Natural killer cell (primary cell): ENCODE measurements at regions of chr18 and their contacts with region 1.

Region 1: DNA sequence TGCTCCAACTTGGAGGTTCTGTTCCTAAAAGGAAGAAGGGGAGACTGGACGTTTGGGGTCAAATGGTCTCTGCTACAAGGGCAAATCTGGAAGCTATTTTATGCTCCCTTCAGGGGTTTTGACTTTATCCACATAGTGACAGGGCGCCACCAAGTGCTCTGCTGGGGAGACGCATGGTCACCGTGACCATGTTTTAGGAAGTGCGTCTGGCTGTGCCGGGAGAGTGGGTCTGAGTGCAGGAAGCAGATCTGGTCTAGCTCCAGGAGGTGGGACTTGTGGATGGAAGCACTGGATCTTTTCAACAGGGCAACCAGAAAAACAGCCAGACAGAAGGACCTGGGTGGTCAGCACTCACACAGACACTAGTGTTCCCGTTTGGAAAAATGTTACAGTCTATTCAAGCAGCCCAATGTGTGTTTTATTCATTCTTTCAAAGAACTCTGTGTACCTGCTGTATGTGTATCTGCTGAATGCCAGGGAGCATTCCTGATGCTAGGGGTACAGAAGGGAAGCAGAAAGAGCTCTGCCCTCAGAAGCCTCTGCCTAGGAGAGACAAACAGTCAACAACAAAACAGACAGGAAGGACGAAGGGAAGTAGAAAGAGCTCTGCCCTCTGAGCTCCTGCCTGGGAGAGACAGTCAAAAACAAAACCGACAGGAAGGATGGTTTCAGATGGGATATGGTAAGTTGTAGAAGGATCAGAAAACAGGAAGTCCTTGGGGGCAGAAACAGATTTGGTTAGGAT is 14.3 kb downstream of the IMPA2 start:
- DNase-seq: peak; percentile 37 to 79
- ATAC-seq: peak; percentile 79 to 94 (median 92)
- H3K4me3 ChIP-seq: no peak overlapping the region
- H3K4me3 Mint-ChIP-seq: peak overlapping the region; percentile 37
- H3K27ac ChIP-seq: no peak overlapping the region
- H3K27ac Mint-ChIP-seq: peak overlapping the region in 1 of 2 donors; percentile 39
- H3K4me1 ChIP-seq: peaks cover 11% of the 10 kb centered on the region
- H3K4me1 Mint-ChIP-seq: peaks cover 8 to 15% of the 10 kb centered on the region in 2 donors
- H3K27me3 ChIP-seq: no peaks in the 10 kb centered on the region
- H3K27me3 Mint-ChIP-seq: no peaks in the 10 kb centered on the region
- CTCF ChIP-seq: peak; percentile 68

Region 2: GRCh38 chr18:11654736-11655605 is 340.6 kb before region 1 on chr18:
- intact Hi-C with region 1: loop called (anchors 2 kb)
- DNase-seq: peak; percentile 22 to 51
- ATAC-seq: peak in 1 of 3 donors; percentile 58
- H3K4me3 ChIP-seq: no peak overlapping the region
- H3K4me3 Mint-ChIP-seq: no peak overlapping the region
- H3K27ac ChIP-seq: no peak overlapping the region
- H3K27ac Mint-ChIP-seq: no peak overlapping the region
- H3K4me1 ChIP-seq: no peaks in the 10 kb centered on the region
- H3K4me1 Mint-ChIP-seq: peaks cover 6% of the 10 kb centered on the region in 2 donors
- H3K27me3 ChIP-seq: no peaks in the 10 kb centered on the region
- H3K27me3 Mint-ChIP-seq: peaks cover 38 to 77% of the 10 kb centered on the region in 2 donors
- CTCF ChIP-seq: peak; percentile 59

Region 3: GRCh38 chr18:11733031-11733430 is 262.6 kb before region 1 on chr18:
- intact Hi-C with region 1: loop called (anchors 1 kb)
- DNase-seq: peak; percentile 58 to 75
- ATAC-seq: peak; percentile 82 to 92 (median 83)
- H3K4me3 ChIP-seq: no peak overlapping the region
- H3K4me3 Mint-ChIP-seq: peak overlapping the region; percentile 53
- H3K27ac ChIP-seq: no peak overlapping the region
- H3K27ac Mint-ChIP-seq: no peak overlapping the region
- H3K4me1 ChIP-seq: peaks cover 4% of the 10 kb centered on the region
- H3K4me1 Mint-ChIP-seq: peaks cover 0 to 5% of the 10 kb centered on the region in 2 donors
- H3K27me3 ChIP-seq: peaks cover 3% of the 10 kb centered on the region
- H3K27me3 Mint-ChIP-seq: peaks cover 14 to 26% of the 10 kb centered on the region in 2 donors
- CTCF ChIP-seq: peak; percentile 85

Region 4: GRCh38 chr18:11851146-11851805 is 144.3 kb before region 1 on chr18 and contains the start of gene CHMP1B:
- intact Hi-C with region 1: no loop called
- DNase-seq: peak; percentile 98 to 99
- ATAC-seq: peak; percentile 79 to 92 (median 82)
- H3K4me3 ChIP-seq: peak within 1 kb of the TSS; percentile 87
- H3K4me3 Mint-ChIP-seq: peak within 1 kb of the TSS; percentile 100
- H3K27ac ChIP-seq: peak within 1 kb of the TSS; percentile 95
- H3K27ac Mint-ChIP-seq: peak within 1 kb of the TSS; percentile 100
- H3K4me1 ChIP-seq: peaks cover 19% of the 10 kb centered on the region
- H3K4me1 Mint-ChIP-seq: peaks cover 43 to 46% of the 10 kb centered on the region in 2 donors
- H3K27me3 ChIP-seq: no peaks in the 10 kb centered on the region
- H3K27me3 Mint-ChIP-seq: no peaks in the 10 kb centered on the region
- CTCF ChIP-seq: no peak
- total RNA-seq, gene CHMP1B: 99.4 to 132 (median 110) TPM

Region 5: GRCh38 chr18:11937874-11938478 is 57.6 kb before region 1 on chr18:
- intact Hi-C with region 1: loop called (anchors 1 kb)
- DNase-seq: peak; percentile 62 to 87
- ATAC-seq: peak; percentile 72 to 80 (median 72)
- H3K4me3 ChIP-seq: no peak overlapping the region
- H3K4me3 Mint-ChIP-seq: no peak overlapping the region
- H3K27ac ChIP-seq: no peak overlapping the region
- H3K27ac Mint-ChIP-seq: no peak overlapping the region
- H3K4me1 ChIP-seq: no peaks in the 10 kb centered on the region
- H3K4me1 Mint-ChIP-seq: peaks cover 4 to 6% of the 10 kb centered on the region in 2 donors
- H3K27me3 ChIP-seq: no peaks in the 10 kb centered on the region
- H3K27me3 Mint-ChIP-seq: peaks cover 0 to 4% of the 10 kb centered on the region in 2 donors
- CTCF ChIP-seq: peak; percentile 78